ENCODE measurements at regions of chr2 and their contacts with region 1.

Region 1: GRCh38 chr2:230824406-230824978 is 40.2 kb upstream of the ITM2C start:
- DNase-seq: peak; percentile 78

Region 2: GRCh38 chr2:230751062-230751461 is 73.4 kb before region 1 on chr2:
- CTCF ChIA-PET with region 1: no interaction called
- POLR2A ChIA-PET with region 1: no interaction called
- DNase-seq: no peak

Region 3: DNA sequence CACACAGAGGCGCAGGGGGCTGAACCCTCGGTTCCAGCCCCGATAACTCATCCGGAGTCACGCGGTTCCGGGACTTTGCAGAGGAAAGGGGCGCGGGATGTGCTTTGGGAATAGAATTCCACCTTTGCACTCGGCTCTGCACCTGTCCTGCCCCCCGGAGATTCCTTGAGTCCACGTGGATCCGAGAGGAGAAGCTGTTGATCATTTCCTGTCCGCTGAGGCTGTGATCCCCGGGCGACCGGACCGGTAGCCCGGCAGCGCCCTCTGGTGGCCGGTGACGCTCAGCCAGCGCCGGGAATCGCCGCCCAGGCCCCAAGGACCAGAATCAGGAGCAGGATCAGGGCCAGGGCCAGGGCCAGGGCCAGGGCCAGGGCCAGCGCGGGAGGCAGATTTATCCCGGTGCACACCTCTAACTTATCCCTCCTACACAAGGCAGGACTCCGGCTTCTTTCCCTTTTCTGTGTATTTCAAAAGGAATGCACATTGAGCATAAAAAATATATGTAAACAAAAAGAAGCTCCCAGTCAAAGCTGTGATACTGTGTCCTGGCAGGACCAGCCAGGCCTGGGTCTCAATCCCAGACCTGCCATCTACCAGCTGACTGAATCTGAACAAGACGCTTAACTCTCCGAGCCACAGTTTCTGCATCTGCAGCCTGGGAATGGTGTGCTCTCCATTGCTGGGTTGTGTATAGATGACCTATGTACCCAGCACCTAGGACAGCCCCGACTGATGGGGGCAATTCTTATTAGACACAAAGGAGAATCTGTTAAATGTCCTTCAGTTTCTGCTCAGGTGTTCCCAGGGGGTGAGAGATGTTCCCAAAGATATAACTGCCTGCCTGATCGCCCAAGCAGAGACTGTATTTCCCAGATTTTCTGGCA is 162.9 kb after region 1 on chr2:
- CTCF ChIA-PET with region 1: interaction called, 18 read pairs
- POLR2A ChIA-PET with region 1: no interaction called
- DNase-seq: peak; percentile 93

Region 4: GRCh38 chr2:231041061-231041689 is 216.7 kb after region 1 on chr2:
- CTCF ChIA-PET with region 1: no interaction called
- POLR2A ChIA-PET with region 1: no interaction called
- DNase-seq: no peak